A673 (cell line): ENCODE measurements at regions of chr19 and their contacts with region 1.

Region 1: DNA sequence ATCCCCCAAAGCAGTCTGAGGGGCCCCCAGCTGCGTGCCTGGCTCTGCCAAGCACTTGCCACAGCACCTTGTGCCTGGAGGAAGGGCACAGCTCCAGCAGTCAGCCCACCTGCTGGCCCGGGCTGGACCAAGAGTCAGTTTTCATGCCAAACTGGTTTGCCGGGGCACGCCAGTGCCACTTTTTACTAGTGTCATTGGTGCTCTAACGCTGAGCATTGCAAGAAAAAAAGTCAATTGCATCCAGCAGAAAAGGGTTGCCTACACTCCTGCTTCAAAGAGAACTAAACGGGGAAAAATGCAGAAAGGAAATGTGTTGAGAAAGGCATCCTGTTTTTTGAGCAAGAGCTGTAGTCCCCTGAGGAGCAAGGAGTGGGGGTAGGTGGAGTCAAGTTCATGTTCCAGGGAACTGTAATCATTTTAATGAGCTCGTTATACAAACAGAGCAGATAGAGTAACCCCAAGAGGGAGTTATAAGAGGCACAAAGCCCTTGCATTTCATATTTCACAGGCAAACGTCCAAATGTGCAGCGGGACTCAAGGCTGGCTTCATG is 68.4 kb downstream of the F2RL3 start:
- DNase-seq: peak; percentile 76
- H3K4me3 ChIP-seq: peak overlapping the region; percentile 31
- H3K27ac ChIP-seq: peak overlapping the region; percentile 80
- H3K4me1 ChIP-seq: peaks cover 20% of the 10 kb centered on the region
- H3K27me3 ChIP-seq: no peaks in the 10 kb centered on the region
- CTCF ChIP-seq: no peak

Region 2: DNA sequence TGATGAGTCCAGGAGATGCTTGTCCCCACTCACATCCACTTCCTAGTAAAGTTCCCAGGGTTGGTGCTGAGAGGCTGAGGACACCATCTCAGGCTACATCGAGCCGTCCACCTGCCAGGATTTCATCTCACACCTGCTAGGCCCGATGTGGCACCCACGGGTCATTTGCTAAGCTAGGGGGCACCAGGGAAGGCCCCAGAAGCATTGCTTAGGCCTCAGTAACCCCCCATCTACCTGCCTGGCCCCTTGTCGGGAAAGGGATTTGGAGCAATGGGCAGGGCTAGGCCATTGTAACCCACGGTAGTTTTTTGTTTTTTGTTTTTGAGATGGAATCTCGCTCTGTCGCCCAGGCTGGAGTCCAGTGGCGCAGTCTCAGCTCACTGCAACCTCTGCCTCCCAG is 16.6 kb before region 1 on chr19:
- CTCF ChIA-PET with region 1: no interaction called
- POLR2A ChIA-PET with region 1: no interaction called
- intact Hi-C with region 1: loop called (anchors 2 kb)
- DNase-seq: no peak
- H3K4me3 ChIP-seq: no peak overlapping the region
- H3K27ac ChIP-seq: no peak overlapping the region
- H3K4me1 ChIP-seq: no peaks in the 10 kb centered on the region
- H3K27me3 ChIP-seq: no peaks in the 10 kb centered on the region
- CTCF ChIP-seq: no peak